Naive thymus-derived CD4-positive, alpha-beta T cell (primary cell): ENCODE measurements at regions of chr11 and their contacts with region 1.

Region 1: DNA sequence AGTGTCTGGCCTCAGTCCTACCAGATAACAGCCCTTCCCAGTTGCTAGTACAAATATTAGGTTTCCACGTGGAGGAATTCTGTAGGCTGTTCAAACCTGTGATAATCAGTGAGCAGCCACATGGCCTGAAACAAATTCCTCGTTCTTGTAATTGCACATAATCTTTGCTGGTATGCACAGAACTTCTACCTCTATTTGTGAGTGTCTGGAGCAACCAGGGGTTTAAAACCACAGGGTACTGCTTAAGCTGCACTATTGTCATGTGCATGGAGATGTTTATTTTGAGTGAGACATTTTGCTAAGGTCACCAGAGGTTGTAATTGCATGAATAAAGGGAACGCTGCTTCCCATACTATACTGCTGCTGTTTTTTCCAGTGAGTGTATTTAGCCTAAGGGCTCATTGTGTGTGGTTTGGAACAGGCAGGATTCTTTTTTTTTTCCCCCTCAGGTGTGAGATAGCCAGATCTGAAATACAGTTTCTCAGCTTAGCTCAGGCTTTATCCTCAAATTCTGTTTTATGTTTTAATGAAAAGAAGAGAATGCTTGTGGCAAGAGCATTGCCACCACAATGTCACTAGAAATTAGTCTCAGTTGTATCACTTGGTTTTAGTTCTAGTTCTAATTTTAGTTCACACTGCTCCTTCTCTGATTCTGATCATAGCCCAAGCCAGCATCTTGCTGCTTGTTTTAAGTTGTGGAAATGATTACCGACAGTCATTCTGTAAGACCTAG is 60.5 kb downstream of the CYB5R2 start:
- DNase-seq: no peak
- ATAC-seq: no peak
- H3K4me3 ChIP-seq: no peak overlapping the region
- H3K4me3 Mint-ChIP-seq: no peak overlapping the region
- H3K27ac ChIP-seq: no peak overlapping the region
- H3K27ac Mint-ChIP-seq: no peak overlapping the region
- H3K4me1 ChIP-seq: no peaks in the 10 kb centered on the region
- H3K4me1 Mint-ChIP-seq: peaks cover 0 to under 1% (median 0%) of the 10 kb centered on the region in 7 donors
- H3K27me3 ChIP-seq: no peaks in the 10 kb centered on the region
- H3K27me3 Mint-ChIP-seq: peaks cover 0 to 9% (median 0%) of the 10 kb centered on the region in 5 donors

Region 2: DNA sequence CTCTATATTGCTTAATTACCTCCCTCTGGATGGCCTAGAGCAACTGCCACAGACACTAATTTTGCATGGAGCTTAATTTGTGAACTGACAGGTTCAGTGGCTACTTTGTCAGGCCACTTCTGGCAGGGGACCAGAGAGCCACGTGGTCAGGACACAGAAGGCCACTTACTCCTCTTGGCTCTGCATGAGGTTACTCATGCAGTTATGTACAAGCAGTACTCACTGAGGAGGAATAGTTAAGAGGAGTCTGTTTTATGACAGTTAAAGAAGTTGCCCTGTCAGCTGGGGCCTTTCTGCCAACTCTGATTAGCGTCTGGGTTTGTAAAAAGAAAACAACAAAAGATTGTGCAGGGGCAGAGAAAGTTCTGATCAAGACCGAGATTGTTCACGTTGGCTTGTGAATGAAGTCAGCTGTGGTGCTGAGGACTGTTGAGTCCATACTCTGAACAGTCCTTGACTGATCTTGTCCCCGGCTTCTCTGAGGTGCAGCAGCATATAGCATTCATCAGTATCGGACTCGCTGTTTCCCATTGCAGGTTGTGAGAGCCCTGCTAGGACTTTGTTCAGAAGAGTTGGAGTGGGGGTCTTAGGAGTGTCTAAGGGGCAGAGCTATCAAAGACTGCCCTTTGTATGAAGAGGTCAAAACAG is 57.7 kb before region 1 on chr11:
- CTCF ChIA-PET with region 1: no interaction called
- POLR2A ChIA-PET with region 1: no interaction called
- intact Hi-C with region 1: loop called in 1 of 2 experiments (anchors 10 kb)
- DNase-seq: no peak
- ATAC-seq: no peak
- H3K4me3 ChIP-seq: no peak overlapping the region
- H3K4me3 Mint-ChIP-seq: no peak overlapping the region
- H3K27ac ChIP-seq: no peak overlapping the region
- H3K27ac Mint-ChIP-seq: no peak overlapping the region
- H3K4me1 ChIP-seq: no peaks in the 10 kb centered on the region
- H3K4me1 Mint-ChIP-seq: peaks cover 0 to 28% (median 14%) of the 10 kb centered on the region in 7 donors
- H3K27me3 ChIP-seq: no peaks in the 10 kb centered on the region
- H3K27me3 Mint-ChIP-seq: peaks cover 0 to 15% (median 0%) of the 10 kb centered on the region in 5 donors